ENCODE measurements at regions of chrX and their contacts with region 1.

Region 1: DNA sequence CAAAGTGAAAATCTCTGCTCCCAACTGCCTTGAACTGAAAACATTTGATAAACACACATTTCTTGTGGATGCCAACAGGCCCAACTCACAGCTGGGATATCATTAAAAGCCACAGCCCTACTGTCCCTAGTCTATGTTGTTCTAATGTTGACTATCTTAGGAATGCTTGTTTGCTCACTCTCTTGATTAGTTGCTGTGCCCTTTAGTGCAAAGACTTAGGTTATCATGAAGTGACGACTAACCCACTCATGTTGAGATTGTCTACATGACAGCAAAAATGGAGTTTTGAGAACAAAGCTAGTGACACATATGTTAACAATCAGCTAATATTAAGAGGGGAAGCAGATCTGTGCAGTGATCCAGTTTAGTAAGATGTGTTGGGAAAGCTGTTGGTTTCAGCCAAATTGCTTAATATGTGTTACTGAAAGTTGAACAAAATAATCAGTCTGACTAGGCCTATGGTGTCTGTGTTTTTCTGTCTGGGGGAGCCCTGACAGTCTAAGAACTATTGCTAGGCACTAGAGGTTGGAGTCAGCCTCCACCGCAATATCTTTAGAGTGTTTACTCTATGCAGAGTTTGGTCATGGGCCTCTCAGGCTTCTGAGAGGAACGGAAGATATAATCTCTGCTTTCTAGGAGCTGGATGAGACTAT is 125.5 kb downstream of the ATG4A start:
- DNase-seq: no peak
- ATAC-seq: no peak
- H3K4me3 ChIP-seq: no peak overlapping the region
- H3K4me3 Mint-ChIP-seq: no peak overlapping the region
- H3K27ac ChIP-seq: no peak overlapping the region
- H3K27ac Mint-ChIP-seq: no peak overlapping the region
- H3K4me1 ChIP-seq: no peaks in the 10 kb centered on the region
- H3K4me1 Mint-ChIP-seq: no peaks in the 10 kb centered on the region
- H3K27me3 ChIP-seq: no peaks in the 10 kb centered on the region
- H3K27me3 Mint-ChIP-seq: peaks cover 0 to 14% of the 10 kb centered on the region in 2 donors
- CTCF ChIP-seq: no peak

Region 2: GRCh38 chrX:107646735-107647134 is 570.3 kb before region 1 on chrX:
- intact Hi-C with region 1: no loop called
- DNase-seq: no peak
- ATAC-seq: no peak
- H3K4me3 ChIP-seq: no peak overlapping the region
- H3K4me3 Mint-ChIP-seq: no peak overlapping the region
- H3K27ac ChIP-seq: no peak overlapping the region
- H3K27ac Mint-ChIP-seq: no peak overlapping the region
- H3K4me1 ChIP-seq: no peaks in the 10 kb centered on the region
- H3K4me1 Mint-ChIP-seq: no peaks in the 10 kb centered on the region
- H3K27me3 ChIP-seq: no peaks in the 10 kb centered on the region
- H3K27me3 Mint-ChIP-seq: no peaks in the 10 kb centered on the region
- CTCF ChIP-seq: no peak

Region 3: DNA sequence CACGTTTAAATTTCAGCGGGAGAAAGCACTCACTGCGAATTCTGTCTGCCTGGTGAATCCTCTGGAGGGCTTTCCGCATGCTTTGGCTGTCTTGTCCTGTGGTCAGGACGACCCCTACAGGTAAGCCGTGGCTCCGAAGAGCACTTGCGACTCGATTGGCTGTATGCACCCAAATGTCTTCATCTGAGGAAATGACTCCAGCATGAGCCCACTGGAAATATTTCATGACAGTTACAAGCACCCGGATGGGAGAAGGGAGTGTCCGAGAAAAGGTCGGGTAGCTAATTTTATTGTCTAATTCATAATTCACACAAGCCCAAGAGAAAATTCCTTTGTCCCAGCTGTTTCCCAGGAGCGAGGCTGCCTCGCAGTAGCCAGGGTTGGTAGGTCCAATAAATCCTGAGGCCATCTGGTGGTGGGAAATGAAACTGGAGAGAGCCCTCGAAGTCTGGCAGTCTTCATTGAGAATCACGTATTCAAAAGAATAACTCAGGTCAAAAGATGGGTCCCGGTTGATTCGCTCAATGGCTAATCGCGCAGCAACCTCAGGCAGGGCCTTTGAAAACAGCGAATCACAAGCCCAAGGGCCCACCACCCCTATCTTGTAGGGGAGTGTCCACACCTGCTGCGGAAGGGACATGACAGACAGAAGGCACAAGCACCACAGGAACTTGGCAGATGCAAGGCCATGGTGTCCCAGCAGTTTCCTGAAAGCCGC is 1258.3 kb after region 1 on chrX:
- intact Hi-C with region 1: loop called (anchors 10 kb)
- DNase-seq: peak in 1 of 2 donors; percentile 9
- ATAC-seq: peak in 1 of 3 donors; percentile 33
- H3K4me3 ChIP-seq: no peak overlapping the region
- H3K4me3 Mint-ChIP-seq: no peak overlapping the region
- H3K27ac ChIP-seq: no peak overlapping the region
- H3K27ac Mint-ChIP-seq: no peak overlapping the region
- H3K4me1 ChIP-seq: peaks cover 9% of the 10 kb centered on the region
- H3K4me1 Mint-ChIP-seq: peaks cover 0 to 5% of the 10 kb centered on the region in 2 donors
- H3K27me3 ChIP-seq: peaks cover 2% of the 10 kb centered on the region
- H3K27me3 Mint-ChIP-seq: peaks cover 0 to 18% of the 10 kb centered on the region in 2 donors
- CTCF ChIP-seq: no peak

Measured in natural killer cell (primary cell).